ENCODE measurements at regions of chr1 and their contacts with region 1.

Region 1: DNA sequence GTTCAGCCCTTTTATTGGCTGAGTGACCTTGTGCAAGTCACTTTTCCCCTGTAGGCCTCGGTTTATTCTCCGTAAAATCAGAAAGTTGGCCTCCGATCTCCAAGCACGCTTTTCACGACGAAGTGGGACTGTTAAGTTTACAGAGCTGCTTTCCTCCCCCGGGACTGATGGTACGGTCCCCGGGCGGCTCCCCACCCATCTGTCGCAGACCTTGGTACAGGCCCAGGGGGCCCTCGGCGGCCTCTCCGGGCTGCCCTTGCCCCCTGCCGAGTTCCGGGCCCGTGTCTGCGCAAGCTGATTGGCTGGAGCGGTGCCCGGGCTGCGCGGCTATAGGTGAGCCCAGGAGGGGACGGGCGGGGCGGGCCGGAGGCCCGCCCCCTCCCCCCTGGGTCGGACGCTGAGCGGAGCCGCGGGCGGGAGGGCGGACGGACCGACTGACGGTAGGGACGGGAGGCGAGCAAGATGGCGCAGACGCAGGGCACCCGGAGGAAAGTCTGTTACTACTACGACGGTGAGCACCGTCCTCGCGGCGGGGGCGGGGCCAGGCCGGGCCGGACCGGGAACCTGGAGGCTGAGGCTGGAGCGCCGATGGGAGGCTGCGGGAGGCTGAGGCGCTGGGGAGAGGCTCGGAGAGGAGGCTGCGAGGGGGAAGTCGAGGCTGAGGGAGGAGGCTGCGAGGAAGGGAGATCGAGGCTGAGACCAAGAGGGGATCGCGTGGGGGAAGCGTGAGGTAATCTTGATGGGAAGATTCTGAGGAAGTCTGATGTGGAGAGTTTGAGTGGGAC is at the start of gene HDAC1:
- DNase-seq: peak; percentile 91 to 97 (median 94)
- ATAC-seq: peak; percentile 98
- H3K4me3 ChIP-seq: peak within 1 kb of the TSS; percentile 92
- H3K4me3 Mint-ChIP-seq: peak within 1 kb of the TSS; percentile 94 to 100 (median 98)
- H3K27ac ChIP-seq: peak within 1 kb of the TSS; percentile 88
- H3K27ac Mint-ChIP-seq: peak within 1 kb of the TSS; percentile 94 to 99 (median 98)
- H3K4me1 ChIP-seq: peaks cover 38 to 46% of the 10 kb centered on the region in 2 donors
- H3K4me1 Mint-ChIP-seq: peaks cover 37 to 67% (median 48%) of the 10 kb centered on the region in 7 donors
- H3K27me3 ChIP-seq: no peaks in the 10 kb centered on the region
- H3K27me3 Mint-ChIP-seq: no peaks in the 10 kb centered on the region
- total RNA-seq, gene HDAC1: 81.8 to 205 (median 174) TPM

Region 2: DNA sequence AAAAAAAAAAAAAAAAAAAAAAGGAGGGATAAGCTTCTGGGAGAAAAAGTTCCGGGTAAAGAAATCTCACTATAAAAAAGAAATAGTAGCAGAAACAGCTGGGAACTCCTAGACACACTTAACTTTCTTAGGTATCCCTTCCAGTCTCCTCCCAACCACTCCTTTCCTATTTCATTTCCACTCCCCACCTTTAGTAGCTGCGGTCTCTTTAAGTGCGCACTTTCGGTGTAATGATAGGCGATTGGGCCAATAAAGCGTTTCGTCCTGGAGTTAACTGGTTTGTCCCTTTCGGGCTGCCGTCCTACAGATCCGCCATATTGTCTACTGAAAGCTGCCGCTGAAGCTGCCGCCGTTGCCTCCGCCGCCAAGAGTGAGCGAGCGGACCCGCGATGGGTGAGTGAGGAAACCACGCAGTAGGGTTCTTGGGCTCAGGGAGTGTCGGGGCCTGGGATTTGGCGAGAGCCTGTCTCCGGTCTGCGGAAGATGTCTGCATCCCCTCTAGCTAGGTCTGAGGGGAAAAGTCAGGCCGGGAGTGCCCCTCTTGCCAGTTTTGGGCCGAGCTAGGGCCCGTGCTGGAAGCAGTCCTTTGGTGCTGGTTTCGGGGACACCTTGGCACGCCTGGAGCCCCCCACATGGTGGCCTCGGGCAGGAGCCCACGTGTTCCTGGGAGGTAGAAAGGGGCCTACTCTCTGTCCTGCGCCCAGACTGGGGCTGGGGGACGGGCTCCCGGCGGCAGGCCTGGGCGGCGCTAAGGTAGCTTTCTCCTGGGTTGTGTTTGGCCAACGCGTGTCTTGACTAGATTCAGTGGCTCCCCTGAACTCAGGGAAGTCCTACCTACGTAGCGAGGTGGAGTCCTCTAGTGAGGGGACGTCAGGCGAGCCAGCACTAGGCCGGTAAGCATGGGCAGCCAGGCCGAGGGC is 183.9 kb before region 1 on chr1 and contains the start of gene KPNA6:
- CTCF ChIA-PET with region 1: no interaction called
- POLR2A ChIA-PET with region 1: interaction called, 4 read pairs
- intact Hi-C with region 1: loop called (anchors 1 kb)
- DNase-seq: peak; percentile 75 to 95 (median 93)
- ATAC-seq: peak; percentile 94
- H3K4me3 ChIP-seq: peak within 1 kb of the TSS; percentile 75
- H3K4me3 Mint-ChIP-seq: peak within 1 kb of the TSS; percentile 95 to 100 (median 99)
- H3K27ac ChIP-seq: peak within 1 kb of the TSS; percentile 94
- H3K27ac Mint-ChIP-seq: peak within 1 kb of the TSS; percentile 93 to 99 (median 98)
- H3K4me1 ChIP-seq: peaks cover 37 to 40% of the 10 kb centered on the region in 2 donors
- H3K4me1 Mint-ChIP-seq: peaks cover 27 to 63% (median 47%) of the 10 kb centered on the region in 7 donors
- H3K27me3 ChIP-seq: no peaks in the 10 kb centered on the region
- H3K27me3 Mint-ChIP-seq: no peaks in the 10 kb centered on the region
- total RNA-seq, gene KPNA6: 47.4 to 63.7 (median 51.6) TPM

Region 3: GRCh38 chr1:32215629-32216480 is 76.0 kb before region 1 on chr1:
- CTCF ChIA-PET with region 1: interaction called, 24 read pairs
- POLR2A ChIA-PET with region 1: interaction called, 15 read pairs
- intact Hi-C with region 1: loop called in 1 of 2 experiments (anchors 1 kb)
- DNase-seq: peak in 8 of 9 donors; percentile 29 to 63 (median 52)
- ATAC-seq: peak; percentile 92
- H3K4me3 ChIP-seq: no peak overlapping the region
- H3K4me3 Mint-ChIP-seq: peak overlapping the region in 6 of 10 donors; percentile 7 to 43 (median 32)
- H3K27ac ChIP-seq: peak overlapping the region; percentile 59
- H3K27ac Mint-ChIP-seq: peak overlapping the region; percentile 25 to 86 (median 63)
- H3K4me1 ChIP-seq: peaks cover under 1 to 12% of the 10 kb centered on the region in 2 donors
- H3K4me1 Mint-ChIP-seq: peaks cover 12 to 31% (median 24%) of the 10 kb centered on the region in 7 donors
- H3K27me3 ChIP-seq: no peaks in the 10 kb centered on the region
- H3K27me3 Mint-ChIP-seq: no peaks in the 10 kb centered on the region

Region 4: DNA sequence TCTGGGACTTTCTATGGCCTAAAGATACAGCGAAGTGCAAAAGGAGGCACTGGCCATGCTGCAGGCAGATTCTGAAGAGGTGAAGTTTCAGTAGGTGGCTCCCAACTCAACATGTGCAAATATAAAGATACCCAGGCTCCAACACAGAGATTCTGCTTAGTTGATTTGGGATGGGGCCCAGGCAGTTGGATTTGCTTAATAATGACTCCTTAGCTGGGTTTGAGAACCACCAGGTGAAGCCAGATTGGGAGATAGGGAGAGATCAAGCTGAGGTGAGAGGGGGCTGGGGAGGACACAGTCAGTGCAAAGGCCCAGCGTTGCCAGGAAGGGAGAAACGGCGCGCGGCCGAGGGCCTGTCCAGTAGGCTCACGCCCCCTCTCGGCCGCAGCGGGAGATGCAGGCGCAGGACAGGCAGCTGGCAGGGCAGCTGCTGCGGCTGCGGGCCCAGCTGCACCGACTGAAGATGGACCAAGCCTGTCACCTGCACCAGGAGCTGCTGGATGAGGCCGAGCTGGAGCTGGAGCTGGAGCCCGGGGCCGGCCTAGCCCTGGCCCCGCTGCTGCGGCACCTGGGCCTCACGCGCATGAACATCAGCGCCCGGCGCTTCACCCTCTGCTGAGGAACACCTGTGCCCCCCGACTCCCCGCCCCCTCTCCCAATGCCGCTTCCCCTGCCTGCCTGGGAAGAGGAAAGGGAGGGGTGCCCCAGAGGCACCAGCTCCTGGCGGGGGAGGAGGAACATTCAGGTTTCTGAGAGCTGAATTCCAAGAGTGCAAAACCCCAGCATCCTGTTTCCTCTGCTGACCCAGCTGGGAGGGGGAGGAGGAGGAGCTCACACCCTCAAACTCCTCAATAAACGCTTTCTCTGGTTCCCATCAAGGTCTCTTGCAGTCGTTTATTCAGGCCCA is 43.7 kb before region 1 on chr1:
- CTCF ChIA-PET with region 1: interaction called, 10 read pairs
- POLR2A ChIA-PET with region 1: interaction called, 155 read pairs
- intact Hi-C with region 1: loop called (anchors 1 kb)
- DNase-seq: peak; percentile 43 to 84 (median 56)
- ATAC-seq: peak; percentile 45
- H3K4me3 ChIP-seq: peak overlapping the region; percentile 52
- H3K4me3 Mint-ChIP-seq: peak overlapping the region; percentile 66 to 100 (median 98)
- H3K27ac ChIP-seq: peak overlapping the region; percentile 91
- H3K27ac Mint-ChIP-seq: peak overlapping the region; percentile 92 to 100 (median 99)
- H3K4me1 ChIP-seq: peaks cover 37 to 51% of the 10 kb centered on the region in 2 donors
- H3K4me1 Mint-ChIP-seq: peaks cover 32 to 60% (median 52%) of the 10 kb centered on the region in 7 donors
- H3K27me3 ChIP-seq: no peaks in the 10 kb centered on the region
- H3K27me3 Mint-ChIP-seq: peaks cover 0 to 2% (median 0%) of the 10 kb centered on the region in 5 donors

Region 5: GRCh38 chr1:32321712-32322291 is 29.9 kb after region 1 on chr1:
- CTCF ChIA-PET with region 1: interaction called, 12 read pairs
- POLR2A ChIA-PET with region 1: interaction called, 78 read pairs
- intact Hi-C with region 1: loop called in 1 of 2 experiments (anchors 1 kb)
- DNase-seq: peak in 7 of 9 donors; percentile 37 to 73 (median 57)
- ATAC-seq: peak; percentile 90
- H3K4me3 ChIP-seq: peak overlapping the region; percentile 33
- H3K4me3 Mint-ChIP-seq: peak overlapping the region; percentile 58 to 85 (median 74)
- H3K27ac ChIP-seq: peak overlapping the region; percentile 58
- H3K27ac Mint-ChIP-seq: peak overlapping the region; percentile 62 to 96 (median 94)
- H3K4me1 ChIP-seq: peaks cover 33 to 46% of the 10 kb centered on the region in 2 donors
- H3K4me1 Mint-ChIP-seq: peaks cover 27 to 69% (median 47%) of the 10 kb centered on the region in 7 donors
- H3K27me3 ChIP-seq: no peaks in the 10 kb centered on the region
- H3K27me3 Mint-ChIP-seq: no peaks in the 10 kb centered on the region

Region 6: DNA sequence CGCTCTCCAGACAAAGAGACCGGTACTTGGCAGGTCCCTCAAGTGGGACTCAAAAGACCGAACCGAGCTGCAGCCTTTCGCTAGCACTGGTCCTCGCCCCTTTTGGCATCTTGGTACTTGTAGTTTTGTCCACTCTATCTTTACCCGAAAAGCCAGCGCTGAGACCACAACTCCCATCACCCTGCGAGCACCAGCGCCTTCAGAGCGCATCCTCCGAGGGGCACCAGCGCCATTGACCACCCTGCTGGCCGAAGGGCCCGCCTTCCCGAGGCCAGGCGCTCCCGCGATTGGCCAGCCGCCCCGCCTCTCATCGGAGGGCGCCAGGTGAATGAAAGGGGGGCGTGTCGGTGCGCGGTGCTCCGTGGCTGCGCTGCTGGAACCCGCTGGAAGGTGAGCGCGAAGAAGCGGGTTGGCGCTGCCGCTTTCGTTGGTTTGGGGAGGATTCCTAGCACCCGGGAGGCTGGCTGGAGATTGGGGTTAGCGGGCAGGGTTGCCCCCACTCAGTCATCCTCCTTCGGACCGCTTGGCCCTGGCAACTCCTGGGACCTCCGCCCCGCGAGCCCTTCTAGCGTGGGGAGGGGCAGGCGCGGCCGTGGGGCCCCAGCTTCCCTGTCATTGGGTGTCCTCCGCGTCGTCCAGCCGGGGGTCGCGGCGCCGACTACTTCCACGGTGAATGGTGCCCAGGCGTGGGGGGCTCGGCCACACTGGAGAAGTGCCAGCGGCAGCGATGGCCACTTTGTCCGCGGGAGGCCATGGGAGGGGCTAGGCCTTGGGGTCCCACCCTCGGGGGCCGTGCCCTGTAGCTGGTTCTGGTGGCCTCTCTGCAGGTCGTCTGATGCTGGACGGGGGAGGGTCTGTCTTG is 173.0 kb after region 1 on chr1 and contains the start of gene ZBTB8B:
- CTCF ChIA-PET with region 1: no interaction called
- POLR2A ChIA-PET with region 1: no interaction called
- intact Hi-C with region 1: no loop called
- DNase-seq: peak in 8 of 9 donors; percentile 7 to 26 (median 13)
- ATAC-seq: peak; percentile 50
- H3K4me3 ChIP-seq: peak within 1 kb of the TSS; percentile 26
- H3K4me3 Mint-ChIP-seq: peak within 1 kb of the TSS; percentile 50 to 88 (median 83)
- H3K27ac ChIP-seq: no peak within 1 kb of the TSS
- H3K27ac Mint-ChIP-seq: no peak within 1 kb of the TSS
- H3K4me1 ChIP-seq: peaks cover 8 to 13% of the 10 kb centered on the region in 2 donors
- H3K4me1 Mint-ChIP-seq: peaks cover 6 to 18% (median 14%) of the 10 kb centered on the region in 7 donors
- H3K27me3 ChIP-seq: peaks cover 0 to 11% of the 10 kb centered on the region in 2 donors
- H3K27me3 Mint-ChIP-seq: peaks cover 48 to 62% (median 56%) of the 10 kb centered on the region in 5 donors
- total RNA-seq, gene ZBTB8B: 0.02 TPM in 1 of 5 experiments, not detected in the others

Measured in naive thymus-derived CD4-positive, alpha-beta T cell (primary cell).